PC-9 (cell line): ENCODE measurements at regions of chr3 and their contacts with region 1.

Region 1: GRCh38 chr3:182618085-182618732 is 175.1 kb upstream of the ATP11B start:
- DNase-seq: peak in 1 of 2 experiments; percentile 62
- H3K4me3 ChIP-seq: no peak overlapping the region
- H3K27ac ChIP-seq: peak overlapping the region; percentile 68
- H3K4me1 ChIP-seq: peaks cover 14% of the 10 kb centered on the region
- H3K27me3 ChIP-seq: no peaks in the 10 kb centered on the region
- CTCF ChIP-seq: peak; percentile 95

Region 2: DNA sequence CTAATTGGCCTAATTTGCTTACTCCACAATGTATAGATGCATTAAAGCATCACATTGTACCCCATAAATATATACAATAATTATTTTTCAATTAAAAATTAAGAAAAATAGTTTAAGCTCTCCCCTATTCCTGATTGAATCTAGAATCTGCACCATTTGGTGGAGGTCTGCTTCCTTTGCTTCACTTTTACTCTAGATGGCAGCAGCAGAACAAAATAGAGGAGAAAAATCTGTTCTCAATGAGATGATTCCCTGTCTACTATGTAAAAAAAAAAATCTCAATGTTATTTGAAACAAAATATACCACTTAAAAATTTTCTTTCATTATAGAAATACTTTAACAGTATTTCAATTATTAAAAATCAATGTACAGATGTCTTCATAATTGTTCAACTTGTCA is 1815.4 kb before region 1 on chr3:
- CTCF ChIA-PET with region 1: no interaction called
- POLR2A ChIA-PET with region 1: no interaction called
- intact Hi-C with region 1: loop called (anchors 10 kb)
- DNase-seq: no peak
- H3K4me3 ChIP-seq: no peak overlapping the region
- H3K27ac ChIP-seq: no peak overlapping the region
- H3K4me1 ChIP-seq: no peaks in the 10 kb centered on the region
- H3K27me3 ChIP-seq: no peaks in the 10 kb centered on the region
- CTCF ChIP-seq: peak; percentile 70

Region 3: GRCh38 chr3:181457756-181458155 is 1160.5 kb before region 1 on chr3:
- CTCF ChIA-PET with region 1: interaction called, 21 read pairs
- POLR2A ChIA-PET with region 1: no interaction called
- intact Hi-C with region 1: no loop called
- DNase-seq: no peak
- H3K4me3 ChIP-seq: no peak overlapping the region
- H3K27ac ChIP-seq: no peak overlapping the region
- H3K4me1 ChIP-seq: no peaks in the 10 kb centered on the region
- H3K27me3 ChIP-seq: no peaks in the 10 kb centered on the region
- CTCF ChIP-seq: no peak

Region 4: DNA sequence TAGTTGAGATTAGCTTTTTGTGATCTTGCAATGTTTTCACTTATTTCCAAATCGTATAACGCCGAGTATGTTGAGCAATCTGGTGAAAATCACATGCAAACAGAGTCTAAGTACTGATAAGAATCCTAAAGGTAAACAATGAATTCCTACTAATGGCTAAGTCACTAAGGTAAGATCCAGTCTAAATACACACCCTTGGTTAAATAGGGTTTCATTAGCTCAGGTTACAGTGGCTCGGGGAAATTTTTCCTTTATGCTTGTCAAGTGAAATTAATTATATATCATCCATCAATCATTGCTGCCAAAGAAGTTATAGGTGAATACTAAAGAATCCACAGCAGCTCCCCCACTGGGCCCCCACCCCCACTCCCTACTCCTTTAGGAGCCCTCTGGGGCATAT is 767.1 kb before region 1 on chr3:
- CTCF ChIA-PET with region 1: interaction called, 3 read pairs
- POLR2A ChIA-PET with region 1: no interaction called
- intact Hi-C with region 1: loop called (anchors 1 kb)
- DNase-seq: peak; percentile 60 to 98
- H3K4me3 ChIP-seq: no peak overlapping the region; the same call in 1 of the 2 replicates
- H3K27ac ChIP-seq: peak overlapping the region; percentile 88
- H3K4me1 ChIP-seq: peaks cover 45% of the 10 kb centered on the region
- H3K27me3 ChIP-seq: no peaks in the 10 kb centered on the region
- CTCF ChIP-seq: no peak

Region 5: DNA sequence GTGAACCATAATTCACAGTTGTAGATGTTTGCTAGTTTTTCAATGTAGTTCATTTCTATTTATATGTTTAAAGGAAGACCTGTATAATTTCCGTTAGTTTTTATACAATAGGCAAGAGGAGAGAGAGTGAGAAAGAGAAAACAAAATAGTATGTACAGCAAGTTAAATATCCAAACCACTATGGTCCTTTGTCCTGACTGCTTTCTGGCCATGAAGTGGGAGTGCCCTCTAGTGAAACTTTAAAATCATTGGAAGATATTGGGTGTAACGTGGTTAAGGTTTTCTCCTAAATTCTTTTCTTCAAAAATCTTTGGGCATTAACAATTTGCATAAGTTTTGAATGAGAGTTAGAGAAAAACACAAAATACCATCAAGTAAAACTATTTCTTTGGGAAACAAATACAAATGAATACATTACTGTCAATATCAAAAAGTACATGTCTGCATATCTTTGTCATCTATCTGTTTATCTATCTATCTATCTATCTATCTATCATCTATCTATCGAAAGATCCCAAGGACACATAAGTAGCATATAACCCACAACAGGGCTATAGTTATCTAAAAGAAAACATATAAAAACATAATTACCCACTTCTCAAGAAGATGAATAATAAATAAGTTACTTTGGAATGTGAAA is 359.6 kb before region 1 on chr3:
- CTCF ChIA-PET with region 1: no interaction called
- POLR2A ChIA-PET with region 1: no interaction called
- intact Hi-C with region 1: loop called (anchors 1 kb)
- DNase-seq: peak; percentile 24 to 55
- H3K4me3 ChIP-seq: no peak overlapping the region
- H3K27ac ChIP-seq: no peak overlapping the region
- H3K4me1 ChIP-seq: no peaks in the 10 kb centered on the region
- H3K27me3 ChIP-seq: no peaks in the 10 kb centered on the region
- CTCF ChIP-seq: peak; percentile 93

Region 6: DNA sequence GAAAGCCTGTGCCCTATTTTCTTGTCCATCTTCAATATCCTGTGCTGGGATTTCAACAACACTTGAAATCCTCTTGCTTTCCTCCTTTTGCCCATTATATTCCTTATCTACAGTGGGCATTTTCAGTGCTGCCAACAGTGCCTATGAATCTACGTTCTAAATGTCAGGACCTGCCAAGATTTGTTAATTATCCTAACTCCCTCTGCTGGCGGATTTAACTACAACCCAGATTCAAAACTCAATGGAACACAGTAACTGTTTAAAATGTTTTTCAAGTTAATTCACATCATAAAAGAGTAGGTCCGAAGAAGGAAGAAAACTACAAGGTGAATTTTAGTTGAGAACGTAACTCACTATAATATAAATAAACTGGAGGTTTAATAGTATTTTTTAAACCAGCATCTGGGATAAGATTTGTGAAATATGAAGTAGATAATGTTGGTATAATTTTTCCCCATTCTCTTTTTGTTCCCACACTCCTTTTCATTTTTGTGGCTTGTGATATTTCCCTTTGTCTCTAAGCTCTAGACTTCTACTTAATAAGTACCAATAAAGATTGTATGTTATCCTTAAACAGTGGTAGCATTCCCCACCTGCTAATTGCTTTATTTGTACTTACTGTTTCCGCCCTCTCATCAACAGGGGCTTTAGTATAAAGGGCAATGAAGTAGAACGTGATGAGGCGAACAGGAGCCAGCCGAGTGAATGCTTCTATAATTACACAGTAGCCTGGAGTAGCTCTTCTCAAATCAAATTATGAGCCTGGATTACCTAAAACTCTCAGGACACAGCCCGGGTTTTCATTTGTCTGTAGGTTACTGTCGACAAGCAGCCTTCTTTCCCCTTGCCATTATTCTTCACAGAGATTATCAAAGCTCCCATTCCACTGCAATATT is 127.4 kb before region 1 on chr3:
- CTCF ChIA-PET with region 1: no interaction called
- POLR2A ChIA-PET with region 1: no interaction called
- intact Hi-C with region 1: loop called (anchors 2 kb)
- DNase-seq: peak; percentile 12 to 37
- H3K4me3 ChIP-seq: no peak overlapping the region
- H3K27ac ChIP-seq: no peak overlapping the region
- H3K4me1 ChIP-seq: peaks cover 3% of the 10 kb centered on the region; the same call in 1 of the 2 replicates
- H3K27me3 ChIP-seq: no peaks in the 10 kb centered on the region
- CTCF ChIP-seq: peak; percentile 74

Region 7: DNA sequence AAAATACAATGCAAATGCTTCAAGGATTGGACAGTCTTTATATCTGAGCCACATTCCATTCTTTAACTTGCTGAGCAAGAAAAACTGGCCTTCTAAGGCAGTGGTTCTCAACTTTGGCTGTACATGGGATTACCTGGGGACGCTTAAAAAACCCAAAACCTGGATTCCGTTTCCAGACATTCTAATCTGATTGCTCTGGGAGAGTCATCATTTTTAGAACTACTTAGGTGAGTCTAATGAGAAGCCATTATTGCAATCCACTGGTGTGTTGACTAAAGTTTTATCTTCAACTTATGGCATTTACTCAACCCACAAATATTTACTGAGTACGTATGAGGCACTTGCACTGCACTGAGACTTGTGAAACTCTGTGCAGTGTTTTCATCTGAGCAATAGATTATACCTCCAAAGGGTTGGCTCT is 20.6 kb before region 1 on chr3:
- CTCF ChIA-PET with region 1: no interaction called
- POLR2A ChIA-PET with region 1: no interaction called
- intact Hi-C with region 1: no loop called
- DNase-seq: peak; percentile 48 to 98
- H3K4me3 ChIP-seq: no peak overlapping the region
- H3K27ac ChIP-seq: peak overlapping the region; percentile 68
- H3K4me1 ChIP-seq: peaks cover 25% of the 10 kb centered on the region
- H3K27me3 ChIP-seq: no peaks in the 10 kb centered on the region
- CTCF ChIP-seq: no peak

Region 8: GRCh38 chr3:183635431-183636220 is 1017.4 kb after region 1 on chr3 and contains the start of gene KLHL24:
- CTCF ChIA-PET with region 1: interaction called, 15 read pairs
- POLR2A ChIA-PET with region 1: no interaction called
- intact Hi-C with region 1: no loop called
- DNase-seq: peak; percentile 91 to 96
- H3K4me3 ChIP-seq: peak within 1 kb of the TSS; percentile 85
- H3K27ac ChIP-seq: peak within 1 kb of the TSS; percentile 50
- H3K4me1 ChIP-seq: peaks cover 9% of the 10 kb centered on the region
- H3K27me3 ChIP-seq: no peaks in the 10 kb centered on the region
- CTCF ChIP-seq: peak; percentile 44; the same call in 1 of the 2 replicates
- total RNA-seq, gene KLHL24: 59.1 and 73.0 TPM in 2 replicates